ENCODE measurements at regions of chr11 and their contacts with region 1.

Region 1: GRCh38 chr11:9363954-9364912 is 20.2 kb upstream of the IPO7 start:
- DNase-seq: peak; percentile 96
- H3K4me3 ChIP-seq: peak overlapping the region; percentile 36 to 40
- H3K27ac ChIP-seq: peak overlapping the region; percentile 96 to 98
- H3K4me1 ChIP-seq: peaks cover 8% of the 10 kb centered on the region
- H3K27me3 ChIP-seq: no peaks in the 10 kb centered on the region
- CTCF ChIP-seq: peak in 1 of 4 experiments; percentile 19
- POLR2A ChIP-seq: peak; percentile 74

Region 2: DNA sequence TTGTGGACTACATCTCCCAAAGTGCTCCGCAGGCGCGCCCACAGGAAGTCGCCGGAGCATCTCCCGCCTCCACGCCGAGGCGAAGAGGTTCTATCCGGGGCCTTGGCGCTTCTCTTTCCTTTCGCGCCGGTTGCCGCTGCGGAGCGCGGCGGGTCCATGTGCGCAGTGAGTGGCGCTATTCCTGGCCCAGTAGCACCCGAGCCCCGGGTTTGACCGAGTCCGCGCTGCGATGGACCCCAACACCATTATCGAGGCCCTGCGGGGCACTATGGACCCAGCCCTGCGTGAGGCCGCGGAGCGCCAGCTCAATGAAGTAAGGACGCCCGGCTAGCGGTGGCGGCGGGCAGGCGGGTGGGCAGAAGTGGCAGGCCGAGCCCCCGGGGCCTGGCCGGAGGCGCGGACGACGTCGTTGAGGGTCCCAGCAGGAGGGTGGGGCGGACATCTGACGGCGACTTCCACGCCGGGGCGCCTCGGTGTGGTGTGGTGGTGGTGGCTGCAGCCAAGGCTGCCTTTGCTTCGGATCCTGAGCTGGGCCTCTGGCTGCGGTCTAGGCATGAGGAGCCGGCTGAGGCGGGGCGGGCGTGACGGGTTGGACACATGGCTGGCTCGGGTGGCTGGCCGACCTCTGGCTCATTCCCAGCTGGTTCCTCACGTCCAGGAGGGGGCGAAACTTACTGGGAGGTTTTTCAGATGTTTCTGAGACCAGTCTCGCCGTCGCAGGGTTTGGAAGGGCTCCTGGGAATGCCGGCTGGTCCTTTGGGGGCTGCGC is 20.5 kb after region 1 on chr11 and contains the start of gene IPO7:
- intact Hi-C with region 1: loop called (anchors 2 kb)
- DNase-seq: peak; percentile 90
- H3K4me3 ChIP-seq: peak within 1 kb of the TSS; percentile 87 to 94
- H3K27ac ChIP-seq: peak within 1 kb of the TSS; percentile 87 to 93
- H3K4me1 ChIP-seq: peaks cover 3% of the 10 kb centered on the region
- H3K27me3 ChIP-seq: no peaks in the 10 kb centered on the region
- CTCF ChIP-seq: peak in 2 of 4 experiments; percentile 22 to 24
- POLR2A ChIP-seq: peak; percentile 77
- total RNA-seq, gene IPO7: 43.8 to 73.3 TPM

Region 3: DNA sequence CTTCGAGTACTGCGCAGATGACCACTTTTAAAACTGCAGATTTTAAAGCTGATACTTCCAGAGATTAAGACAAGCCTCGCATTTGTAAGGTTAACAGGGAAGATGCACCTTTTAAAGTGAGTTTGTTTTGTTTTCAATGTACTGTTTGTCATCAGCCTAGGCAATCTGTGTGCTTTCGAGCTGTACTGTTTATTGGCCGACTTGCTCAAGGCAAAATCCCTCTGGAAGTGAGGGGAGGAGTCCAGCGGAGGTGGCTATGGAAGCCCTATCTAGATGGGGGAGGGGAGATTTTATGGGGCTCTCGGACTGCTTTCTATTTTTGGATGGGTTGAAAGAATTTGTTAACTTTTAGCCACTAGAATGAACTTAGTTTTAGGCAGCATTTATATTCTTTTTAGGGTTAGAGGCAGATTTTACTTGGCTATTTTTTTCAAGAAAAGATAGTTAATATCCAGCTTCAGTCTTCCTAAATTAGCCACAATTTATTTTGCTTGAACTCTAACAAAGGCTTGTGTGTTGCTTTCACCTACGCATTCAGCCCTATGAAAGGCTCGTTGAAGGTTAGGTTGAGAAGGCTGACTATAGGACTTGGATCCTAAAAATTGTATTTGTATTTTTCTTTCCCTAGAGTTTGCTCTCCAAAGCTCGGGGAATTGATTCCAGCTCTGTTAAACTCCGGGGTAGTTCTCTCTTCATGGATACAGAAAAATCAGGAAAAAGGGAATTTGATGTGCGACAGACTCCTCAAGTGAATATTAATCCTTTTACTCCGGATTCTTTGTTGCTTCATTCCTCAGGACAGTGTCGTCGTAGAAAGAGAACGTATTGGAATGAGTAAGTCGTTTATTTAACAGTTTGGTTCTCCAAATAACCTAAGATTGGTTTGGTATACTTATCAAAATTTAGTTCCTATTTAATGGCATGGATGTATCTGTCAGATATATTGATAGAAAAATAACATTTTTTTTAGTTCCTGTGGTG is 211.3 kb after region 1 on chr11:
- intact Hi-C with region 1: no loop called
- DNase-seq: peak; percentile 75
- H3K4me3 ChIP-seq: peak overlapping the region; percentile 77
- H3K27ac ChIP-seq: peak overlapping the region; percentile 93 to 99
- H3K4me1 ChIP-seq: no peaks in the 10 kb centered on the region
- H3K27me3 ChIP-seq: no peaks in the 10 kb centered on the region
- CTCF ChIP-seq: no peak
- POLR2A ChIP-seq: peak; percentile 71